ENCODE measurements at regions of chr3 and their contacts with region 1.

Region 1: DNA sequence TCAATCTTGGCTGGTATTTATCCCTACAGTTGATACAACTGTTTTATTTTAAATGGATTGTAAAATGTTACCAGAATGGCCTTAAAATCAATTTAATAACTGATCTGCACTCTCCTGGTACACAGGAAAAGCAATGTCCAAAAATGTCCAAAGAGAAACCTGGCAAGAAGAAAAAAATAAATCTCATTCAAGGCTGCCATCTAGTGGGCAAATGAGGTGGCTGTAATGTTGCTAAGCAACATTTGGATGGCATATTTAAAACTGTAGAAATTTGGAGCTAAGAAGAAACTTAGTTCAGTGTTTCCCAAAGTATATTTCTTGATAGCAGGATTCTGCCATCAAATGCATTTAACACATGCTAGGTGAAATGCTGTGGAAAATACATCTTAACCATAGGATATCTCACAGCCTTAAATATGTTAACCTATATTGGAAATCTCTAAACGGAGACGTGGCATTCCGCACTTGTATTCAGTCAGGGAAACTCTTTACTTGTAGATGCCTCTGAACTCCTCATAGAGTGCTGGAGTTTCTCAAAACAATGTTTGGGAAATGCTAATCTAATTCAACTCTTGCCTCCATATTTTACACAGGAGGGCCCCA is 216.8 kb downstream of the ERC2 start:
- DNase-seq: peak in 1 of 5 donors; percentile 7
- ATAC-seq: no peak
- H3K4me3 ChIP-seq: no peak overlapping the region
- H3K27ac ChIP-seq: no peak overlapping the region
- H3K4me1 ChIP-seq: peaks cover 0 to 4% (median 0%) of the 10 kb centered on the region in 12 donors
- H3K27me3 ChIP-seq: peaks cover 0 to 3% (median 0%) of the 10 kb centered on the region in 9 donors
- CTCF ChIP-seq: peak; percentile 53 to 84 (median 72)
- POLR2A ChIP-seq: no peak

Region 2: DNA sequence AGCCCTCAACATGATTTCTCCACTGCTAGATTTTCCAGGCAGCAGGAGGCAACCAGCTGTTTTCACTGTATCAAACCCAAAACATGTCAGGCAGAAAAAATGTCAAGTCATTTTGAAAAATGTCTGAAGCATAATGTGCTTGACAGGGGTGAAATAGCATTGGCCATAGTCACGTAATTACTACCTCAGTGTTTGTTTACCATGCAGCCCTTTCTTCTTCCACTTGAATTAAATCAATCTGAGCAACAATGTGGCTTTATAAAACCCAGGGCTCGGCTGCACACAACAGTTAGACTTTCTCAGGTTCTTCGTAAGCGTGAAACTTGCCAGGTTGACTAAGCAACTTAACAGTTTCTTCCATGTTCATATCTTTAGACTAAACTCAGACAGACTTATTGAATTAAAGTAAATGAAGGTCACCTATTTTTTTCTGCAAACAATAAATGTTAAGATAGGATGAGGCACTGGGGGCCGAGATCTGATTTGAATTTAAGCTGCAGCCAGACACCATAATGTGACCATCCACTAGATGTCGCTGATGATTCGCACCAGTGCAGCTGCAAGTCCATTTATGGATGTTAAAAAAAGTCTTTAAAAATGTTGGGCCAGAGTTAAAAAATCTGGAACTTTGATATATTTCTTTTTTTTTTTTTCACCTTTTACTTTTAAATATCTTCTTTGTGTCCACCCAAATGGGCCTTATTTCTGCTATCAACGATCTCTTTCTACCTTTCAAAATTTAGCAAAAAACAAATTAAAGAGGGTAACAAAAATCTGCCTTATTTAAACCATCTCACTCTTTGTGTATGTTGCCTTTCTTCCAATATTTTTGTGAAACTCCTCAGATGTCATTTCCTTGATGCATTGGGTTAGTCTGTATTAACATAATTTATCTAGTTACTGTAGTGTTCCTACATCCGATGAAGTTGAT is 1823.2 kb before region 1 on chr3:
- intact Hi-C with region 1: loop called in 2 of 10 experiments (anchors 10 kb)
- DNase-seq: peak in 4 of 5 donors; percentile 32 to 44 (median 39)
- ATAC-seq: peak in 1 of 4 donors; percentile 52
- H3K4me3 ChIP-seq: peak overlapping the region in 1 of 12 donors; percentile 17
- H3K27ac ChIP-seq: no peak overlapping the region
- H3K4me1 ChIP-seq: peaks cover 0 to 6% (median 0%) of the 10 kb centered on the region in 12 donors
- H3K27me3 ChIP-seq: peaks cover 0 to 2% (median 0%) of the 10 kb centered on the region in 9 donors
- CTCF ChIP-seq: peak; percentile 68 to 89 (median 76)
- POLR2A ChIP-seq: no peak

Region 3: GRCh38 chr3:54863131-54863765 is 1388.2 kb before region 1 on chr3:
- intact Hi-C with region 1: loop called in 6 of 10 experiments (anchors 10 kb)
- DNase-seq: no peak
- ATAC-seq: peak in 2 of 4 donors; percentile 28 to 68
- H3K4me3 ChIP-seq: no peak overlapping the region
- H3K27ac ChIP-seq: no peak overlapping the region
- H3K4me1 ChIP-seq: peaks cover 0 to 38% (median 3%) of the 10 kb centered on the region in 12 donors
- H3K27me3 ChIP-seq: no peaks in the 10 kb centered on the region
- CTCF ChIP-seq: no peak
- POLR2A ChIP-seq: no peak

Region 4: DNA sequence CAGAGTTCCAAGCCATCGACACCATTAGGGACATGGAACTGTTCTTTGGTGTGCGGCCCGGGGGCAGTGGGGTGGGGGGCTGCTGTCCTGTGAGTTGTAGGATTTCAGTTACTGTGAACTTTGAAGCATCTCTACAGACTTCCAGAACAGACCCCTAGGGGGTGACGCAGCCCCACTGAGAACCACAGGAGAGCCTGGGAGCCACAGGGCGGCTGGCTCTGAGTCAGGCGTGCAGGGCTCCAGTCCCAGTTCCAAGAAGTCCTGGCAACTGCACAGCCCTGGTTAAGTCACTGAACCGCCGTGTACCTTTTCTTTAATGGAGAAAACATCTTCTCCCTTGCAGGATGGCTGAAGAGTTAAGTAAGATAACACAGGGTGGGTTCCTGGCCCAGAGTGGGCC is 1300.0 kb before region 1 on chr3:
- intact Hi-C with region 1: loop called in 3 of 10 experiments (anchors 5 to 10 kb)
- DNase-seq: peak; percentile 70 to 87 (median 84)
- ATAC-seq: peak; percentile 93 to 100 (median 98)
- H3K4me3 ChIP-seq: no peak overlapping the region
- H3K27ac ChIP-seq: no peak overlapping the region
- H3K4me1 ChIP-seq: peaks cover 0 to 16% (median 2%) of the 10 kb centered on the region in 12 donors
- H3K27me3 ChIP-seq: no peaks in the 10 kb centered on the region
- CTCF ChIP-seq: peak; percentile 47 to 71 (median 60)
- POLR2A ChIP-seq: no peak

Region 5: DNA sequence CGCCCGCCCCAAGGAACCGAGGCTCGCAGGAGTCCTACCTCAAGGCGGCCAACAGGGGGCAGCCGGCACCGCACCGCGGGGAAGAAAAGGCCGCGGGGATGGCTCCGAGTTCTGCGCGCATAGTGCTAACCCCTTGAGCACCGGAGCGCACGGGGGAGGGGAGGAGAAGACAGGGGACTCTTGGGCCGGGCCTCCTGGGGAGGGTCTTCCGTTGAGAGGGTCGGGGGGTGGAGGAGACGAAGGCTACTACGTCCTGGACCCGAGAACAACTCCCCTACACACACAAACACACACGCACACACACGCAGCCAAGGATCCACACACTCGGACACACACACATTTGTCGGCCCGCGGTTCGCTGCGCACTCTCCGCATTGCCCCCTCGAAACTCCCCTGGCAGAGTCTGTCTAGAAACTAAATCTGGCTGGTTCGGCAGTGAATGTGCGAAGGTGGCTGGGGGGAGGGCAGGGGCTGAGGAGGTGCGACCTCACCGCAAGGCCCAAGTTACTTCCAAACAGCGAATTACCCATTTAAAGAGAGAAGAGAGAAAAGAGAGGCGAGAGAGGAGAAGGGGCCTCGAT is 766.1 kb before region 1 on chr3:
- intact Hi-C with region 1: loop called in 9 of 10 experiments (anchors 2 to 10 kb)
- DNase-seq: peak; percentile 69 to 87 (median 75)
- ATAC-seq: peak; percentile 64 to 83 (median 83)
- H3K4me3 ChIP-seq: peak overlapping the region; percentile 37 to 92 (median 66)
- H3K27ac ChIP-seq: peak overlapping the region in 10 of 12 donors; percentile 2 to 73 (median 61)
- H3K4me1 ChIP-seq: peaks cover 0 to 71% (median 13%) of the 10 kb centered on the region in 12 donors
- H3K27me3 ChIP-seq: peaks cover 4 to 90% (median 12%) of the 10 kb centered on the region in 9 donors
- CTCF ChIP-seq: peak; percentile 51 to 86 (median 72)
- POLR2A ChIP-seq: no peak

Region 6: DNA sequence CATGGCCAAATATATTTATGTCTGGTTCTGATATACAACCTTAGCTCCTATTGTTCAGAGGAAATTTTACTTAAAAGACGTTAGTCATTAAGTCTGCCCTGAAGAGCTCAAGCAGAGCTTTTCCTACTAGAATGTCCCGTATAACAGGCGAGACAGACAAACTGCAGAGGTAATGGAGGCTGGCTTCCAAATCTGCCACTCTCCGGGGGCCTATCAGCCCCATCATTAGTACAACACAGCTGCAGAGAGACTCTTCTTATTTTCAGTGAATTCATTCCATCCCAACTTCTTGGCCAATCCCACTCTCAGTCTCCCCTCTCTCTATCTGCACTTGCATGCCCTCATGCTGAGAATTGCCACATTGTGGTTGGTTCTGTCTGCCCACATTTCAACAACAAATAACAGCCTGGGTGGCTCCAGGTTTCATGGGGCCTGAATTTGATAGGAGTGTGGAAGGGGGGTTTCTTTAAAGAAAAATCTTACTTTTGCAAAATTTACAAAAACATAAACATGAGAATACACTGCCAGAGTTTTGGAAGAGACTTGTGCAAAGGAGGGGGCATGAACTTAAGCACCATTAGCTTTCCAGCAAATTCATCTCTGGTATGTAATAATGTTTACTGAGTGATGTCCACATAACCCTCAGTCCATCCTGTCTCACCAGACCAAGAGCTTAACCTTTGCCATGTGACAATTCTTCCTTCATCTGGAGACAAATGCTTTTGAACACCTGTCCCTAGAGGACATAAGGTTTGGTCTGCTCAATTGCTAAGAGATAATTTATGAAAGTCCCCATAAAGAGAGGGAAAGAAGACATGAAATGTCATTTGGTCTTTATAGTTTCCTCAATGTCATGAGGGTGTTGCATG is 195.7 kb before region 1 on chr3:
- intact Hi-C with region 1: loop called in 2 of 10 experiments (anchors 10 kb)
- DNase-seq: no peak
- ATAC-seq: no peak
- H3K4me3 ChIP-seq: no peak overlapping the region
- H3K27ac ChIP-seq: no peak overlapping the region
- H3K4me1 ChIP-seq: peaks cover 0 to 3% (median 0%) of the 10 kb centered on the region in 12 donors
- H3K27me3 ChIP-seq: no peaks in the 10 kb centered on the region
- CTCF ChIP-seq: no peak
- POLR2A ChIP-seq: no peak

Measured in heart left ventricle (tissue), 16 donors.